Endothelial cell of umbilical vein (primary cell): ENCODE measurements at regions of chr2 and their contacts with region 1.

Region 1: GRCh38 chr2:40448468-40449079 is 3.3 kb downstream of the SLC8A1 start:
- DNase-seq: peak; percentile 42
- H3K4me3 ChIP-seq: no peak overlapping the region
- H3K27ac ChIP-seq: no peak overlapping the region
- H3K4me1 ChIP-seq: peaks cover 10% of the 10 kb centered on the region
- H3K27me3 ChIP-seq: no peaks in the 10 kb centered on the region
- CTCF ChIP-seq: peak; percentile 47 to 59
- POLR2A ChIP-seq: no peak

Region 2: GRCh38 chr2:39632871-39633270 is 815.7 kb before region 1 on chr2:
- CTCF ChIA-PET with region 1: no interaction called
- POLR2A ChIA-PET with region 1: no interaction called
- dilution Hi-C with region 1: no loop called
- intact Hi-C with region 1: no loop called
- DNase-seq: no peak
- H3K4me3 ChIP-seq: no peak overlapping the region
- H3K27ac ChIP-seq: no peak overlapping the region
- H3K4me1 ChIP-seq: no peaks in the 10 kb centered on the region
- H3K27me3 ChIP-seq: peaks cover 0 to 4% of the 10 kb centered on the region in 2 experiments
- CTCF ChIP-seq: no peak
- POLR2A ChIP-seq: no peak

Region 3: GRCh38 chr2:40212804-40213470 is 235.6 kb before region 1 on chr2:
- CTCF ChIA-PET with region 1: interaction called, 11 read pairs
- POLR2A ChIA-PET with region 1: no interaction called
- dilution Hi-C with region 1: no loop called
- intact Hi-C with region 1: no loop called
- DNase-seq: peak; percentile 22
- H3K4me3 ChIP-seq: no peak overlapping the region
- H3K27ac ChIP-seq: no peak overlapping the region
- H3K4me1 ChIP-seq: no peaks in the 10 kb centered on the region
- H3K27me3 ChIP-seq: peaks cover 0 to 1% of the 10 kb centered on the region in 2 experiments
- CTCF ChIP-seq: peak in 1 of 2 donors; percentile 32
- POLR2A ChIP-seq: no peak

Region 4: GRCh38 chr2:40332191-40332826 is 116.3 kb before region 1 on chr2:
- CTCF ChIA-PET with region 1: interaction called, 11 read pairs
- POLR2A ChIA-PET with region 1: no interaction called
- dilution Hi-C with region 1: no loop called
- intact Hi-C with region 1: no loop called
- DNase-seq: peak; percentile 95
- H3K4me3 ChIP-seq: no peak overlapping the region
- H3K27ac ChIP-seq: peak overlapping the region; percentile 10
- H3K4me1 ChIP-seq: peaks cover 24% of the 10 kb centered on the region
- H3K27me3 ChIP-seq: no peaks in the 10 kb centered on the region
- CTCF ChIP-seq: no peak
- POLR2A ChIP-seq: no peak

Region 5: GRCh38 chr2:40431600-40431955 is 17.0 kb before region 1 on chr2:
- CTCF ChIA-PET with region 1: interaction called, 59 read pairs
- POLR2A ChIA-PET with region 1: no interaction called
- dilution Hi-C with region 1: no loop called
- intact Hi-C with region 1: loop called (anchors 1 kb)
- DNase-seq: no peak
- H3K4me3 ChIP-seq: no peak overlapping the region
- H3K27ac ChIP-seq: no peak overlapping the region
- H3K4me1 ChIP-seq: peaks cover 31% of the 10 kb centered on the region
- H3K27me3 ChIP-seq: no peaks in the 10 kb centered on the region
- CTCF ChIP-seq: no peak
- POLR2A ChIP-seq: no peak

Region 6: DNA sequence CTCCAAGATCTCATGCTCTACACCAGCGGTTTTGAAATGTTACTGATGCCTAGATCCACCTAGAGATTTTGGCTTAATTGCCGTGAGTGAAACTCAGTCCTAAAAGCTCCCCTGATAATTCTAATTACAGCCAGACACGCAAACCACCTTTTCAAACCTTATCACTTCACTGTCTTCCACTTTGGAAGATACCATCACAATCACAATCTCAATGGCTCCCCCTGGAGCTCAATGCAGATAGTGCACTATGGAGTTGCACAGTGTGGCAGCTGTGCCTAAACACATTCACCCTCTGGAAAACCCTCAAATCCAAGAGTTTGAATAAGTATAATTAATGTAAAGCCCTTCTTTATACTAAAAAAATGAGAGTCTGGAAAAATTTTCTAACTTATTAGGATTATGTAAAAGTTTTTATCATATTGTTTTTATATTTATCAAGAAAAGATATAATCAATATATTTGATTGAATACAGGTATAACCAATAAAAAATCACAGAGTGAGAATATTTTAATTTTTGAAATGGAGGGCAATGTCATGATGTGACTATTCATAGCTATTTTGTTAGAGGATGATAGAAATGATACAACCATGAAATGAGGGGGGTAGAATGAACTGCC is 106.2 kb after region 1 on chr2:
- CTCF ChIA-PET with region 1: interaction called, 33 read pairs
- POLR2A ChIA-PET with region 1: no interaction called
- dilution Hi-C with region 1: no loop called
- intact Hi-C with region 1: loop called (anchors 1 kb)
- DNase-seq: peak; percentile 69
- H3K4me3 ChIP-seq: no peak overlapping the region
- H3K27ac ChIP-seq: no peak overlapping the region
- H3K4me1 ChIP-seq: no peaks in the 10 kb centered on the region
- H3K27me3 ChIP-seq: no peaks in the 10 kb centered on the region
- CTCF ChIP-seq: peak; percentile 70 to 80
- POLR2A ChIP-seq: no peak

Region 7: DNA sequence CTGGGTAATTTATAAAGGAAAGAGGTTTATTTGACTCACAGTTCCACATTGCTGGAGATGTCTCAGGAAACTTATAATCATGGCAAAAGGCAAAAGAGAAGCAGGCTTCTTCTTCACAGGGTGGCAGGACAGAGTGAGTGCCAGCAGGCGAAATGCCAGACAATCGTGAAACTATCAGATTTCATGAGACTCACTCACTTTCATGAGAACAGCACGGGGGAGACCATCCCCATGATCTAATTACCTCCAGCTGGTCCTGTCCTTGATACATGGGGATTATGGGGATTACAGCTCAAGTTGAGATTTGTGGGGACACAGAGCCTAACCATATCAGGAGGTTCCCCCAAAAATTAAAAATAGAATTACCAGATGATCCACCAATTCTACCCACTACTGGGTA is 678.8 kb after region 1 on chr2:
- CTCF ChIA-PET with region 1: no interaction called
- POLR2A ChIA-PET with region 1: no interaction called
- dilution Hi-C with region 1: no loop called
- intact Hi-C with region 1: no loop called
- DNase-seq: no peak
- H3K4me3 ChIP-seq: no peak overlapping the region
- H3K27ac ChIP-seq: no peak overlapping the region
- H3K4me1 ChIP-seq: no peaks in the 10 kb centered on the region
- H3K27me3 ChIP-seq: no peaks in the 10 kb centered on the region
- CTCF ChIP-seq: no peak
- POLR2A ChIP-seq: no peak

Region 8: GRCh38 chr2:41400088-41400665 is 951.6 kb after region 1 on chr2:
- CTCF ChIA-PET with region 1: interaction called, 4 read pairs
- POLR2A ChIA-PET with region 1: no interaction called
- dilution Hi-C with region 1: no loop called
- intact Hi-C with region 1: loop called (anchors 10 kb)
- DNase-seq: peak; percentile 62
- H3K4me3 ChIP-seq: no peak overlapping the region
- H3K27ac ChIP-seq: no peak overlapping the region
- H3K4me1 ChIP-seq: no peaks in the 10 kb centered on the region
- H3K27me3 ChIP-seq: no peaks in the 10 kb centered on the region
- CTCF ChIP-seq: peak; percentile 32 to 59
- POLR2A ChIP-seq: no peak